ENCODE measurements at regions of chr12 and their contacts with region 1.

Region 1: GRCh38 chr12:69157023-69157655 is 82.2 kb upstream of the CPSF6 start:
- DNase-seq: peak; percentile 68 to 93 (median 83)
- ATAC-seq: peak; percentile 90 to 99 (median 96)
- H3K4me3 ChIP-seq: no peak overlapping the region
- H3K4me3 Mint-ChIP-seq: peak overlapping the region; percentile 46 to 64 (median 56)
- H3K27ac ChIP-seq: no peak overlapping the region
- H3K27ac Mint-ChIP-seq: peak overlapping the region; percentile 20 to 61
- H3K4me1 ChIP-seq: peaks cover 2 to 13% of the 10 kb centered on the region in 2 experiments
- H3K4me1 Mint-ChIP-seq: peaks cover 22 to 37% (median 33%) of the 10 kb centered on the region in 3 donors
- H3K27me3 ChIP-seq: no peaks in the 10 kb centered on the region
- H3K27me3 Mint-ChIP-seq: no peaks in the 10 kb centered on the region

Region 2: GRCh38 chr12:69214169-69214568 is 57.0 kb after region 1 on chr12:
- CTCF ChIA-PET with region 1: interaction called in 1 of 2 experiments, 8 read pairs
- POLR2A ChIA-PET with region 1: interaction called in 1 of 2 experiments, 10 read pairs
- DNase-seq: no peak
- ATAC-seq: no peak
- H3K4me3 ChIP-seq: no peak overlapping the region
- H3K4me3 Mint-ChIP-seq: no peak overlapping the region
- H3K27ac ChIP-seq: no peak overlapping the region
- H3K27ac Mint-ChIP-seq: no peak overlapping the region
- H3K4me1 ChIP-seq: no peaks in the 10 kb centered on the region
- H3K4me1 Mint-ChIP-seq: no peaks in the 10 kb centered on the region
- H3K27me3 ChIP-seq: no peaks in the 10 kb centered on the region
- H3K27me3 Mint-ChIP-seq: no peaks in the 10 kb centered on the region

Region 3: DNA sequence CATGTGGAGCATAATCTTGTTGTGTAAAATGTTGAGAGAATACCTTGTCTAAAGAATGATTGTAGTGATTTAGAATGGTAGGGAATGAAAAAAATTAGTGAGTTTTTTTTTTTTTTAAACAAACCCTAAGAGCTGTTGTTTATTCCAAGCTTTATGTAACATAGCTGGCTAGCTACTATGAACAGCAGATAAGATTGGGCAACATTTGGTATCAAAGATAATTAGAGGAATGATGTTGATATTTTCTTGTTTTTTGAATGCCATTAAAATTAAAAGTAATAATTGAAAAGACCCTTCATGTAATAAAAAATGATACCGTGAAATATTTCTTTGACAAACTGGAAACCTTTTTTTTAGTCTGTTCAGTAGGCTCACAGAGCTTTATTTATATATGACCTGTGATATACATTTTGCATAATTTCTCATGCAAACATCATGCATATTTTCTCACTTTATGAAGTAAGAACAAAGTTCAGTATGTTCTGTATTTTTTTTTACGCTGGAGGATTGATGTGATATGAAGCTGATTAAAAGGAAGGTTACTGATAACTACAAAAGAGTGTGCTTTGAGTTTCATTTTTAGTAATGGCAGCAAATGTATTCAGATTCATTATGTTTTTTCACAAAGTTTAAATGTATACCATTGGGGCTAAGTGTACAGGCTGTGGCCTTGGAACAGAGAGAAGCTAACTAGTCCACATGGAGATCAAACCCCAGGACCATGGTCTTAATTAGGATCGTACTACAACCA is 90.3 kb after region 1 on chr12:
- CTCF ChIA-PET with region 1: interaction called, 63 to 104 read pairs
- POLR2A ChIA-PET with region 1: interaction called in 1 of 2 experiments, 5 read pairs
- DNase-seq: no peak
- ATAC-seq: no peak
- H3K4me3 ChIP-seq: no peak overlapping the region
- H3K4me3 Mint-ChIP-seq: peak overlapping the region; percentile 23 to 40 (median 39)
- H3K27ac ChIP-seq: no peak overlapping the region
- H3K27ac Mint-ChIP-seq: peak overlapping the region; percentile 22 to 64
- H3K4me1 ChIP-seq: peaks cover 13 to 29% of the 10 kb centered on the region in 2 experiments
- H3K4me1 Mint-ChIP-seq: peaks cover 81 to 88% (median 84%) of the 10 kb centered on the region in 3 donors
- H3K27me3 ChIP-seq: no peaks in the 10 kb centered on the region
- H3K27me3 Mint-ChIP-seq: no peaks in the 10 kb centered on the region

Region 4: GRCh38 chr12:69254046-69254445 is 96.9 kb after region 1 on chr12:
- CTCF ChIA-PET with region 1: interaction called, 63 to 104 read pairs
- POLR2A ChIA-PET with region 1: interaction called in 1 of 2 experiments, 3 read pairs
- DNase-seq: peak in 2 of 35 experiments; percentile 37 to 81
- ATAC-seq: peak; percentile 79 to 83 (median 82)
- H3K4me3 ChIP-seq: no peak overlapping the region
- H3K4me3 Mint-ChIP-seq: no peak overlapping the region
- H3K27ac ChIP-seq: peak overlapping the region; percentile 33
- H3K27ac Mint-ChIP-seq: peak overlapping the region; percentile 70 to 74
- H3K4me1 ChIP-seq: peaks cover 0 to 8% of the 10 kb centered on the region in 2 experiments
- H3K4me1 Mint-ChIP-seq: peaks cover 43 to 46% (median 43%) of the 10 kb centered on the region in 3 donors
- H3K27me3 ChIP-seq: no peaks in the 10 kb centered on the region
- H3K27me3 Mint-ChIP-seq: no peaks in the 10 kb centered on the region

Region 5: GRCh38 chr12:69262264-69262974 is 105.3 kb after region 1 on chr12:
- CTCF ChIA-PET with region 1: interaction called, 7 to 11 read pairs
- POLR2A ChIA-PET with region 1: no interaction called
- DNase-seq: no peak
- ATAC-seq: no peak
- H3K4me3 ChIP-seq: no peak overlapping the region
- H3K4me3 Mint-ChIP-seq: no peak overlapping the region
- H3K27ac ChIP-seq: no peak overlapping the region
- H3K27ac Mint-ChIP-seq: no peak overlapping the region
- H3K4me1 ChIP-seq: no peaks in the 10 kb centered on the region
- H3K4me1 Mint-ChIP-seq: peaks cover 3 to 13% (median 6%) of the 10 kb centered on the region in 3 donors
- H3K27me3 ChIP-seq: no peaks in the 10 kb centered on the region
- H3K27me3 Mint-ChIP-seq: no peaks in the 10 kb centered on the region

Region 6: GRCh38 chr12:70330159-70330558 is 1173.0 kb after region 1 on chr12:
- CTCF ChIA-PET with region 1: no interaction called
- POLR2A ChIA-PET with region 1: interaction called in 1 of 2 experiments, 18 read pairs
- DNase-seq: no peak
- ATAC-seq: no peak
- H3K4me3 ChIP-seq: no peak overlapping the region
- H3K4me3 Mint-ChIP-seq: no peak overlapping the region
- H3K27ac ChIP-seq: no peak overlapping the region
- H3K27ac Mint-ChIP-seq: peak overlapping the region in 1 of 2 donors; percentile 28
- H3K4me1 ChIP-seq: peaks cover 0 to 6% of the 10 kb centered on the region in 2 experiments
- H3K4me1 Mint-ChIP-seq: peaks cover 31 to 38% (median 37%) of the 10 kb centered on the region in 3 donors
- H3K27me3 ChIP-seq: no peaks in the 10 kb centered on the region
- H3K27me3 Mint-ChIP-seq: no peaks in the 10 kb centered on the region